PC-3 (cell line): ENCODE measurements at regions of chr7 and their contacts with region 1.

Region 1: DNA sequence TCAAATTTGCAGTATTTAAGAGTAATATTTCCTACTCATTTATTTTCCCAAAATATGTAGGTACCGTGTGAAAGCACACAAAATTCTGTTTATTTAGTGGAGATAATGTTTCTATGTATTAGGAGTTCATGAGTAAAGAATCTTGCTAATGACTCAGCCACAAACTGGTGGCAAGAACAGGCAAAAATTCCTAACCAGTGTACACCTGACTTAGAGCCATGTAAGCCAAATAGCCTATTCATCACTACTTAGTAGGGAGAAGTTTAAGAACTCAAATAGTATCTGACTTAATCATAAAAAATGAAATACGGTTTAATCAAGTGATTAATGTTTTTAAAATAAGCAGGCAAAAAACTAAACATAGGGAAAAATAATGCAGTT is 169.0 kb downstream of the SRPK2 start:
- DNase-seq: peak; percentile 93
- ATAC-seq: peak; percentile 84
- H3K4me3 ChIP-seq: peak overlapping the region; percentile 1; the same call in 1 of the 2 replicates
- H3K27ac ChIP-seq: peak overlapping the region; percentile 91
- H3K4me1 ChIP-seq: peaks cover 52% of the 10 kb centered on the region
- H3K27me3 ChIP-seq: no peaks in the 10 kb centered on the region
- CTCF ChIP-seq: no peak

Region 2: GRCh38 chr7:105098863-105099515 is 120.8 kb before region 1 on chr7:
- CTCF ChIA-PET with region 1: no interaction called
- POLR2A ChIA-PET with region 1: no interaction called
- intact Hi-C with region 1: loop called (anchors 5 kb)
- DNase-seq: peak; percentile 82
- ATAC-seq: peak; percentile 68
- H3K4me3 ChIP-seq: no peak overlapping the region
- H3K27ac ChIP-seq: peak overlapping the region; percentile 53
- H3K4me1 ChIP-seq: peaks cover 52% of the 10 kb centered on the region
- H3K27me3 ChIP-seq: no peaks in the 10 kb centered on the region
- CTCF ChIP-seq: no peak

Region 3: DNA sequence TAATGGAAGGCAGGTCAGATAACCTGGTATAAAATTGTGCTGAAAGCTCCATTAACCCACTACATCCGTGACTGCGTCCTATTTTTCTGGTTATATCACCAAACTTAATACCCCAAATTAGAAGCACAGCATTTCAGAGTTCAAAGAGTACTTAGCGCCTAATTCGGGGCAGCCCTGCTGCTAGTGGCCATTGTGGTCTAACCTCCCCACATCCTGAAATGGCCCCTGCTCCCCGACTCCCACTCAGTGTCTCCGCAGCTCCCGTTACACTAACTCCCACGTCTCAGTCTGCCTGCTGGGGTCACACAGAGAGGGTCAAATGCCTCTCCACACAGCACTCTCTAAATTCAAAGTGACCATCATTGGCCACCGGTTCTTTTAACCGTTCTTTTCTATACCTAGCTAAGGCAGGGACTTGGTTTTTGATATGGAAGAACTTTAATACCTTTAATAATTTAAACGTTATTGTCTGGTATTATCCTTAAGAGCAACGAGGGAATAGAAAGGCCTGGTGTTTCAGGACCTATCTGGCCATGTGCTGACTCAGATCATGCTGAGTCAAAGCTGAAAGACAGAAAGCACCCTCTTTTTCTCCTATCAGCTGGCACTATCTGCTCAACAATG is 88.6 kb before region 1 on chr7:
- CTCF ChIA-PET with region 1: no interaction called
- POLR2A ChIA-PET with region 1: no interaction called
- intact Hi-C with region 1: no loop called
- DNase-seq: no peak
- ATAC-seq: no peak
- H3K4me3 ChIP-seq: no peak overlapping the region
- H3K27ac ChIP-seq: no peak overlapping the region
- H3K4me1 ChIP-seq: peaks cover 3% of the 10 kb centered on the region
- H3K27me3 ChIP-seq: no peaks in the 10 kb centered on the region
- CTCF ChIP-seq: no peak

Region 4: DNA sequence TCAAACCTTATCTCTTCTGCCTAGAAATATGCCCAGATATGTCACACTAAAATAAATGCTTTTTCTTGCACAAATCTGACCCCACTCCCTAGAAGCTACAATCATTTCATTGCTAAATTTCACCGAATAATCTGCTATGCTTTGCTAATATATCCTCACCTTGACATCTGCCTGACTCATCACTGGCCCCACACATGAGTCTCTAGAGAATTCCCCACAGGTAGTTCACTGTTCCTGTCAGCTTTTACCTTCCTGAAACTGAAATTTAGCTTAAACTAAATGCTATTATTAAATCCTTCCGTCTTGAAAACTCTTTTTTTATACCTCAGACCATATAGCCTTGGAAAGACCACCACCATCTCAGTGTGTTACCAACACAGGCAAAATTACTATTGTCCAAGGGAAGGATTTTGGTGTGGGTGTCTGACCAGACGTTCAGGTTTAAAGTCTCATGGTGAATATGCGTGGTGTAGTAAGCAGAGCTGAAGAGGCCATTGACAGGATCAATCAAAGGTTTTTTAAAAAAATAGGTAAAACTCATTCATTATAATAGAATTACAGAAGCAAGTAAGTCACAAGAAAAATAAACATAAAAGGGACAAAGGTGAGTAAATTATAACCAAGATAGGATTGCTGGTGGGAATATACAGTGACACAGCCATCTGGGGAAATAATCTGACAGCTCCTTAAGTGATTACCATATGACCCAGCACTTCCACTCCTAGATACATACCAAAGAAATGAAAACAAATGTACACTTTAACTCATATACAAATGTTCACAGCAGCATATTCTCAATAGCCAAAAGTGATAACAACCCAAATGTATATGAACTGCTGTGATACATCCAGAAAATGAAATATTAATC is 32.2 kb before region 1 on chr7:
- CTCF ChIA-PET with region 1: no interaction called
- POLR2A ChIA-PET with region 1: no interaction called
- intact Hi-C with region 1: no loop called
- DNase-seq: peak; percentile 4
- ATAC-seq: no peak
- H3K4me3 ChIP-seq: no peak overlapping the region
- H3K27ac ChIP-seq: no peak overlapping the region
- H3K4me1 ChIP-seq: no peaks in the 10 kb centered on the region
- H3K27me3 ChIP-seq: no peaks in the 10 kb centered on the region
- CTCF ChIP-seq: no peak